Ascending aorta (tissue), 2 donors: ENCODE measurements at regions of chr13 and their contacts with region 1.

Region 1: GRCh38 chr13:40666045-40666904 is at the start of gene FOXO1:
- DNase-seq: peak; percentile 65 to 94
- H3K4me3 ChIP-seq: peak within 1 kb of the TSS; percentile 74 to 79
- H3K27ac ChIP-seq: peak within 1 kb of the TSS; percentile 96 to 100
- H3K4me1 ChIP-seq: peaks cover 0 to 18% of the 10 kb centered on the region in 2 donors
- H3K27me3 ChIP-seq: no peaks in the 10 kb centered on the region
- CTCF ChIP-seq: peak in 1 of 3 experiments; percentile 17
- total RNA-seq, gene FOXO1: 65.1 TPM

Region 2: GRCh38 chr13:39942552-39943273 is 723.6 kb before region 1 on chr13:
- intact Hi-C with region 1: loop called (anchors 5 kb)
- DNase-seq: peak in 1 of 2 donors; percentile 83
- H3K4me3 ChIP-seq: no peak overlapping the region
- H3K27ac ChIP-seq: no peak overlapping the region
- H3K4me1 ChIP-seq: no peaks in the 10 kb centered on the region
- H3K27me3 ChIP-seq: no peaks in the 10 kb centered on the region
- CTCF ChIP-seq: peak; percentile 81 to 91 (median 86)

Region 3: DNA sequence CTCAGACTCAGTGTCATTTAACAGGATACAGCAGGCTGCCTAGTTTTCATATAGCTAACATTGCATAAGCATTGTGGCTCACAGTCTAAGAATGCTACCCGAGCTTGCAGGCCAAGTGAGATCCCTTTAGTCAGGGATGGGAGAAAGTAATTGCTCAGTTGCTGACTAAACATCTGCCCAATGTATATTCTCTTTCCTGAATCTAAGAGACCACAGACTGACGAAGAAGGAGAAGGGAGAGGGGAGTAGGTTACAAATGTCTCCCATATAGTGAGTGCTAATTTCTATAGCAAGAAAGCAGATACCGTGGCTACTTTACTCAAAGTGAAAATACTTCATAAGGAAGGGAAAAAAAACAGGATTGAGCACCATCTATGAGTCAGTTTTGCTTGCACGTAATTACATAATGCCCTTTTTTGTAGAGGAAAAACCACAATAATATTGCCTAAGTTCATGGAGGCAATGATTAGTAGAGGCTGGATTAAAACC is 556.9 kb before region 1 on chr13:
- intact Hi-C with region 1: loop called (anchors 1 kb)
- DNase-seq: peak in 1 of 2 donors; percentile 69
- H3K4me3 ChIP-seq: no peak overlapping the region
- H3K27ac ChIP-seq: peak overlapping the region in 1 of 2 donors; percentile 47
- H3K4me1 ChIP-seq: peaks cover 0 to 7% of the 10 kb centered on the region in 2 donors
- H3K27me3 ChIP-seq: no peaks in the 10 kb centered on the region
- CTCF ChIP-seq: no peak

Region 4: DNA sequence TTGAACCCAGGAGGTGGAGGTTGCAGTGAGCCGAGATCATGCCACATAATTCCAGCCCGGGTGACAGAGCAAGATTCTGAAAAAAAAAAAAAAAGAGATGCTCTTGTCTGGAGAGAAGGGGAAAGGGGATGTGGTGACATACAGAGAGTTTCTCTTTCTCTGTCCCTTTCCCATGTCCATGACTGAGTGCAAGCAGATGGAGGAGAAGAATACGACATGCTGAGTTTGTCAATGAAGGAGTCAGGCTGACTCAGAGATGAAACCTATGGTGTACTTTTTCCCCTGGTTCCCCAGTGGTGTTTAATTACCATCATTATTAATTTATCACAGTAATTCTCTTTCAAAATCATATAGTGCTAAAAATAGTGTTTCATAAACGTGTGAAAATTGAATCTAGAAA is 448.6 kb before region 1 on chr13:
- intact Hi-C with region 1: loop called (anchors 5 kb)
- DNase-seq: no peak
- H3K4me3 ChIP-seq: no peak overlapping the region
- H3K27ac ChIP-seq: no peak overlapping the region
- H3K4me1 ChIP-seq: peaks cover 2 to 11% of the 10 kb centered on the region in 2 donors
- H3K27me3 ChIP-seq: no peaks in the 10 kb centered on the region
- CTCF ChIP-seq: no peak

Region 5: DNA sequence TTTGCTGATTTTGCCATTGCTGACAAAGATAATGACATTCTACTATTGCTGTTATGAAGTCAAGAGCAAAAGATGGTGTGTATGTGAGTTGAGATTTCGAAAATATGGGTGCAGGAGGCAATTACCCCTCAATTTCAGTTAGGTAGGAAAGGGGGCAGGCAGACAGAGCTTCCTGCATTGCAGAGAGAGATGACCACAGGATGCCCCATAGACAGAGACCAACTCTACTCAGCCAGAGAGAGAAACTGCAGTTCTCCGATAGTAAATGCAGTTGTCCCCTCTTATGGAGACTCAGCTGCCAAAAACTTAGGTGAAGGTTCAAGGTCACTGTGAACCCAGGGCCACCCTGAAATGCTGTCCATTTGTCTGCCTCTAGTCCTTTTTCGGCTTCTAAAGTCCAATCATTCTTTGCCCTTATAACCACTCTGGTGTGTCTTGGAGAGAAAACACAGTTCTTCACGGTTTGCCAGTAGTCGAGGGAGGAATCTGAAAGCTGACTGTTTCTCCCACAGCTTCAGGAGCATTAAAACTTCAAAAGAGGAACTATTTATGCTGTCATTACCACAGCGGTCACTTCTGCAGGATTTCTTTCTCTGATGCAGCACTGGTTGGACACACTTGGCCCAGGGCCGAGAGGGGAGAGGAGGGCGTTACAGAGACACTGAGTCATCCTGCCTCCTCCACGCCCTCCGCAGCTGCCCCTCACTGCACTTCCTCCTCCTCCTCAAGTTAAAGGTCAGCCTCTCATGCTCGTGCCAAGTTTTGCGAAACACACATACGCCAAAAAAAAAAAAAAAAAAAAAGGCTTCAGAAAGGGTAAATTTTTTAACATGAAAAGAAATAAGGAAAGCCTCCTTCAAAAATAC is 264.1 kb before region 1 on chr13:
- intact Hi-C with region 1: loop called (anchors 2 kb)
- DNase-seq: peak; percentile 81 to 97
- H3K4me3 ChIP-seq: peak overlapping the region; percentile 28 to 42
- H3K27ac ChIP-seq: peak overlapping the region; percentile 62 to 68
- H3K4me1 ChIP-seq: peaks cover 4 to 16% of the 10 kb centered on the region in 2 donors
- H3K27me3 ChIP-seq: no peaks in the 10 kb centered on the region
- CTCF ChIP-seq: no peak

Region 6: GRCh38 chr13:40589285-40590109 is 76.8 kb before region 1 on chr13:
- intact Hi-C with region 1: loop called (anchors 5 kb)
- DNase-seq: peak; percentile 29 to 74
- H3K4me3 ChIP-seq: no peak overlapping the region
- H3K27ac ChIP-seq: peak overlapping the region; percentile 41 to 68
- H3K4me1 ChIP-seq: peaks cover 15 to 34% of the 10 kb centered on the region in 2 donors
- H3K27me3 ChIP-seq: no peaks in the 10 kb centered on the region
- CTCF ChIP-seq: no peak

Region 7: DNA sequence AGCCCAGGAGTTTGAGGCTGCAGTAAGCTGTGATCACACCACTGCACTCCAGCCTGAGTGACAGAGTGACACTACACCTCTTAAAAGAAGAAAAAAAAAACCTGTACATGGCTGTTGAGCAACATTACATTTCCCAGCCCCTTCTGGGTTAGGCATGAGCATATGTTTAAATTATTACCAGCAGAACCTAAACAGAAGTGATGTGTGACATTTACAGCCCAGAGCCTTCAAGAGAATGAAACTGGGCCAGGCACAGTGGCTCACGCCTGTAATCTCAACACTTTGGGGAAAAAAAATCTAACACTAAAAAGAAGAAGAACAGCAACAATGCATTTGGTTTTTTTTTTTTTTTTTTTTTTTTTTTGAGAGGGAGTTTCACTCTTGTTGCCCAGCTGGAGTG is 66.4 kb after region 1 on chr13:
- intact Hi-C with region 1: no loop called
- DNase-seq: no peak
- H3K4me3 ChIP-seq: no peak overlapping the region
- H3K27ac ChIP-seq: no peak overlapping the region
- H3K4me1 ChIP-seq: no peaks in the 10 kb centered on the region
- H3K27me3 ChIP-seq: no peaks in the 10 kb centered on the region
- CTCF ChIP-seq: no peak